Common myeloid progenitor, CD34-positive (primary cell): ENCODE measurements at regions of chr5 and their contacts with region 1.

Region 1: GRCh38 chr5:149960272-149961185 is at the start of gene SLC26A2:
- DNase-seq: peak; percentile 95 to 96 (median 96)
- H3K4me3 ChIP-seq: peak within 1 kb of the TSS; percentile 48 to 86 (median 78)
- H3K27ac ChIP-seq: peak within 1 kb of the TSS; percentile 33 to 83
- H3K4me1 ChIP-seq: peaks cover 0 to 23% (median 22%) of the 10 kb centered on the region in 4 experiments
- H3K27me3 ChIP-seq: no peaks in the 10 kb centered on the region

Region 2: DNA sequence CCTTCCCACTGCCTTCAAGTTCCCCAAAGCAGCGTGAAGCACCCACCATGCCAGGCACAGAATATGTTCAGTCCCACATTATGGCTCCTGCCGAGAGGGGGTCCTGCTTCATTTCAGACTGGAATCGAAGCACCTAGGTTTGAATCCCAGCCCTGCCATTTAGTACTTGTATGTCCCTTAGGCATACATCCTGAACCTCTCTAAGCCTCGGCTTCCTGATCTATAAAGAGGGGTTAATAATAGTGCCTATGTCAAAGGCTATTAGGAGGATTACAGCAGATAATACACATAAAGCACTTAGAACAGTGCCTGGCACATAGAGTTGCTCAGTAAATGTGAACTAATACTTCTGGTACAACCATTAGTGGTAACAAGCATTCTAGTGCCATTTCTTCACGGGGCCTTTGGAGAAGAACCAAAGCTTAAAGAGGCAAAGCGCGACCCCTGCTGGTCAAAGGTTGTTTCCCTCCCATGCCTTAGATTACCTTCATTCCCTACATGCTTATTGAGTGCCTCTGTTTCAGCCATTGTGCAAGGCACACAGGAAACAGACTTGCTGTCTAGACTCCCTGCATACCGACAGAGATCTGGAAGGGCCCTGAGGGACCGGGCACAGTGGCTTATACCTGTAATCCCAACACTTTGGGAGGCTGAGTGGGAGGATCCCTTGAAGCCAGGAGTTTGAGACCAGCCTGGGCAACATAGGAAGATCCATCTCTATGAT is 132.2 kb before region 1 on chr5:
- CTCF ChIA-PET with region 1: interaction called, 305 read pairs
- POLR2A ChIA-PET with region 1: no interaction called
- DNase-seq: peak; percentile 85 to 92 (median 87)
- H3K4me3 ChIP-seq: no peak overlapping the region
- H3K27ac ChIP-seq: no peak overlapping the region
- H3K4me1 ChIP-seq: peaks cover 0 to 4% (median 0%) of the 10 kb centered on the region in 4 experiments
- H3K27me3 ChIP-seq: no peaks in the 10 kb centered on the region

Region 3: GRCh38 chr5:149852641-149853330 is 107.7 kb before region 1 on chr5:
- CTCF ChIA-PET with region 1: interaction called, 305 read pairs
- POLR2A ChIA-PET with region 1: no interaction called
- DNase-seq: peak; percentile 18 to 47 (median 35)
- H3K4me3 ChIP-seq: no peak overlapping the region
- H3K27ac ChIP-seq: no peak overlapping the region
- H3K4me1 ChIP-seq: peaks cover 0 to 10% (median 6%) of the 10 kb centered on the region in 4 experiments
- H3K27me3 ChIP-seq: no peaks in the 10 kb centered on the region

Region 4: GRCh38 chr5:149924486-149924885 is 36.0 kb before region 1 on chr5:
- CTCF ChIA-PET with region 1: no interaction called
- POLR2A ChIA-PET with region 1: no interaction called
- DNase-seq: no peak
- H3K4me3 ChIP-seq: no peak overlapping the region
- H3K27ac ChIP-seq: no peak overlapping the region
- H3K4me1 ChIP-seq: no peaks in the 10 kb centered on the region
- H3K27me3 ChIP-seq: no peaks in the 10 kb centered on the region

Region 5: GRCh38 chr5:149937618-149938017 is 22.9 kb before region 1 on chr5:
- CTCF ChIA-PET with region 1: interaction called, 15 read pairs
- POLR2A ChIA-PET with region 1: no interaction called
- DNase-seq: no peak
- H3K4me3 ChIP-seq: no peak overlapping the region
- H3K27ac ChIP-seq: no peak overlapping the region
- H3K4me1 ChIP-seq: peaks cover 0 to 6% (median 1%) of the 10 kb centered on the region in 4 experiments
- H3K27me3 ChIP-seq: peaks cover 0 to 4% (median 0%) of the 10 kb centered on the region in 5 experiments

Region 6: GRCh38 chr5:150245111-150245789 is 284.7 kb after region 1 on chr5:
- CTCF ChIA-PET with region 1: no interaction called
- POLR2A ChIA-PET with region 1: no interaction called
- DNase-seq: no peak
- H3K4me3 ChIP-seq: no peak overlapping the region
- H3K27ac ChIP-seq: no peak overlapping the region
- H3K4me1 ChIP-seq: no peaks in the 10 kb centered on the region
- H3K27me3 ChIP-seq: no peaks in the 10 kb centered on the region